ENCODE measurements at regions of chr4 and their contacts with region 1.

Region 1: DNA sequence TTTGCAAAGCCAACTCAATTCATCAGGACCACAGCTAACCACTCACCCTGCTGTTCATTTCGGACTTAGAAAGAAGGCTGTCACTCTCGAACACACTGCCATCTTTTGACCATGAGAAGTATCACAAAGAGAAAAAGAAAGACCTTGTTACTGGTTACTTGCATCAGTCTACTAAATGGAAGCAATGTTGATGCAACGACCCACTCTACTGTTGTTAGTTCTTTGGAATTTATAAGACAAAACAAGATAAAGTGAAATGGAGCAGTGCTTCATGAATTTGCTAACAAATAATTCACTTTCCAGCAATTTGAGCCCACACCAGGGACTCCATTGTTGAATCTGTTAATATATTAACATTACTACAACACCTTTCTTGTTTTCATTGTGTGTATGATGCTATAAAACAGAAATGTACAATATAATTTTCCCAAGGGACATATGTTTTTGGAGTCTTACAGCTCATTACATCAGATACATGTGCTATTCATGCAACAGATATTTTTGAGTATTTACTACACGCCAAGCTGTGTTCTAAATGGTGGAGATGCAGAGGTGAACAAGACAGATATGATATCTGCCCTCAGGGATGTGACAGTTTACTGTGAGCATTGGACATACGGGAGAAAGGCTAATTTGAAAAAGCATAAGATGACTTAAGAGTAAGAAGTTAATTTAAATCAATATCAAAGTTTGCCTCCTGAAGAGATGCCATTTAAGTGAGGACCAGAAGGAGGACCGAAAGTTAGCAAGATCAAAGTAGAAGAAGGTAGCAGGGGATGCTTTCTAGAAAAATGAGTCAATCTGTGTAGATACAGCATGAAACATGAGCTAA is 87.2 kb downstream of the AREG start:
- H3K4me3 ChIP-seq: no peak overlapping the region
- H3K27ac ChIP-seq: no peak overlapping the region
- H3K4me1 ChIP-seq: no peaks in the 10 kb centered on the region
- CTCF ChIP-seq: peak; percentile 61

Region 2: GRCh38 chr4:73405138-73405537 is 1127.0 kb before region 1 on chr4:
- CTCF ChIA-PET with region 1: interaction called, 13 read pairs
- POLR2A ChIA-PET with region 1: no interaction called
- H3K4me3 ChIP-seq: no peak overlapping the region
- H3K27ac ChIP-seq: no peak overlapping the region
- H3K4me1 ChIP-seq: no peaks in the 10 kb centered on the region
- CTCF ChIP-seq: no peak

Region 3: GRCh38 chr4:74370912-74371311 is 161.3 kb before region 1 on chr4:
- CTCF ChIA-PET with region 1: interaction called, 74 read pairs
- POLR2A ChIA-PET with region 1: no interaction called
- H3K4me3 ChIP-seq: no peak overlapping the region
- H3K27ac ChIP-seq: no peak overlapping the region
- H3K4me1 ChIP-seq: no peaks in the 10 kb centered on the region
- CTCF ChIP-seq: 0 out of 2 replicates have a peak, but pooled peaks have one; percentile 10

Region 4: DNA sequence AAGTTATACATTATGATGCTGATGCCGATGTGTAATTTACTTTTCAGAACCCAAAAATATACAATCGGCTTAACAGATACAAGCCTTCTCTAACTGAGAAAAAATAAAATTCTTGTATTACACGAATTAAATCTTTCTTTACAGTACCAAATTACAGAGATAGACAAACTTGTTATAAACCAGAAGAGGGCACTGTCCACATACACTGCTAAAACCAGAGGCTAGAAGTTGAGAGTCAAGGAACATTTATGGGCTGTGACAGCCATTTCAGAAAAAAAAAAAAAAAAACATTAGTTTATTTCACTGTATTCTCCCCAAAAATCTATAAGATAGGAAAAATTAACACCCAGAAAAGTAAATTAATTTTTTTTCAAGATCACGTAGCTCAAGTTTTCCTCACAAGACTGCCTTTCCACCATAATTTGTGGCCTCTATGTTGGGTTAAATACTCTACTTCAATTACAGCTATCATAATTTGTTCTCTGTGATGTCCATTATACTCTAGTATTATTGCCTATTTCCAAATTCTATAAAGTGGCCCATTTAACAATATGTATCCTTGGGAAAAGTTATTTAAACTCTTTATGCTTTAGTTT is 155.2 kb before region 1 on chr4:
- CTCF ChIA-PET with region 1: interaction called, 74 read pairs
- POLR2A ChIA-PET with region 1: no interaction called
- H3K4me3 ChIP-seq: no peak overlapping the region
- H3K27ac ChIP-seq: no peak overlapping the region
- H3K4me1 ChIP-seq: no peaks in the 10 kb centered on the region
- CTCF ChIP-seq: no peak

Region 5: DNA sequence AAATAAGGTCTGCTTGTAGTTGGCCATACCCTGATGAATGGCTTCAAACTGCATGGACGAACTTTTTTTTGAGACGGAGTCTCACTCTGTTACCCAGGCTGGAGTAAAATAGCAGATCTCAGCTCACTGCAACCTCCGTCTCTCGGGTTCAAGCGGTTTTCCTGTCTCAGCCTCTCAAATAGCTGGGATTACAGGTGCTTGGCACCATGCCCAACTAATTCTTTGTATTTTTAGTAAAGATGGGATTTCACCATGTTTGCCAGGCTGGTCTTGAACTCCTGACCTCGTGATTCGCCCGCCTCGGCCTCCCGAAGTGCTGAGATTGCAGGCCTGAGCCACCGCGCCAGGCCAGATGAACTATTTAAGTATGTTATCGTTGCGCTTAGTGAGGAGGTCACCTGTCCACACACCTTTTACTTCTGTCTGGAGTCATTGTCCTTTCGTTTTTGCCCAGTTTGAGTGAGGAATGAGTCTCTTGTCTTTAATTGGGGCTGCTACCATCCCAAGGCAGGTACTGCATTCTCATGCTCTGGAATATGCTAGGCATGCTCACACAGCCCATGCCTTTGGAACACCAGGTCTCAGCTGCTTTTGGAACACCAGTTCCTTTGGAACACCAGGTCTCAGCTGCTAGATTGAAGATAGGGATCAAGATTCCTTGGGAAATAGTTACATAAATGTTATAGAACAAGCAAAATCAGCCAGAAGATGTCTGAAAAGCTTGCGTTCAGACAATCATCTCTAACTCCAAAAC is 14.4 kb before region 1 on chr4:
- CTCF ChIA-PET with region 1: interaction called, 11 read pairs
- POLR2A ChIA-PET with region 1: no interaction called
- H3K4me3 ChIP-seq: no peak overlapping the region
- H3K27ac ChIP-seq: no peak overlapping the region
- H3K4me1 ChIP-seq: no peaks in the 10 kb centered on the region
- CTCF ChIP-seq: no peak

Region 6: DNA sequence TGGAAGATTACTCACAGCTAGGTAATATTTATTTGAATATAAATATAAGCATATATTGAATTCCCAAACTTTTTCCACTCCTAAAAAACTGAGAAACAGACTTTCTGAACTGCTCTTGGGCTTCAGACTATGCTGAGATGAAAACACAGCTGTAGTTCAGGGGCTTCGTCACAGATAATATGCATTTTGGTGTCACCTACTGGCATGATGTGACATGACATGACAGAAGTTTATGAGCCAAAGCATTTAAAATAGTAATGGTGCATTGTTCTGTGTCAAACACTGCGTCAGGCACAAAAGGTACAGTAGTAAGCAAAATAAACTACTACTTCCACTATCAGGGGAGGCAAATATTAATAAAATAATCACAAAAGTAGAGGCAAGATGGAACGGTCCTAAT is 90.9 kb after region 1 on chr4:
- CTCF ChIA-PET with region 1: interaction called, 22 read pairs
- POLR2A ChIA-PET with region 1: no interaction called
- H3K4me3 ChIP-seq: no peak overlapping the region
- H3K27ac ChIP-seq: no peak overlapping the region
- H3K4me1 ChIP-seq: 0 out of 2 replicates have a peak, but pooled peaks cover 3% of the 10 kb centered on the region
- CTCF ChIP-seq: no peak

Region 7: DNA sequence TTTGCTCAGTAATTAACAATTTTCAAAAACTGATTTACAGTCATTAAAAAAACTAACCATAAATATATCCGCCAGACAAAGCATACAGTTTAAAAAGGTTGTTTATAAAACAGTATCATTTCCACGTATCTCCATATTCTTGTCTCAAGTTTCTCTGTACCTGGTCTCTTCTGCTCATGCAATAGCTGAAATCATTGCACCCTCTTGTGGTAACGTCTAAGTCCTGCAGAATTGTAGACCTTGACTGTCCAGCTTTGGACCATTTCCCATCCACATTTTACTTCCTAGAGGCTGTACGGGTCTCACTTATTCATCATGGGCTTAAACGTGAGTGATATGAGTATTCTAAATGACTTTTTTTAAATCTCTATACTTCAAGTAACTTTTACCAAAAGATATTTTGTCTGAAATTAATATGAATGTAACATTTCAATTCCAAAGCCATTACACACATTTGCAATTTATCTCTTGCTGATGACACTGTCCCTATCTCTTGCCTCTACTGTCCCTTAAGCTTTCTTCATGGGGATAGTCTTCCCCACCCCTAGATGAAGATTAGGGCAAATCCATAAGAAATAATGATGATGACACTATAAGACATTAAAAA is 143.6 kb after region 1 on chr4:
- CTCF ChIA-PET with region 1: interaction called, 27 read pairs
- POLR2A ChIA-PET with region 1: no interaction called
- H3K4me3 ChIP-seq: no peak overlapping the region
- H3K27ac ChIP-seq: no peak overlapping the region
- H3K4me1 ChIP-seq: no peaks in the 10 kb centered on the region
- CTCF ChIP-seq: peak; percentile 59

Measured in HEK293 (cell line).